ENCODE measurements at regions of chr3 and their contacts with region 1.

Region 1: GRCh38 chr3:111989061-111989678 is 9.6 kb upstream of the TAGLN3 start:
- DNase-seq: no peak
- ATAC-seq: peak; percentile 88
- H3K4me3 Mint-ChIP-seq: no peak overlapping the region
- H3K27ac Mint-ChIP-seq: no peak overlapping the region
- H3K4me1 Mint-ChIP-seq: peaks cover 28% of the 10 kb centered on the region
- H3K27me3 Mint-ChIP-seq: no peaks in the 10 kb centered on the region

Region 2: GRCh38 chr3:112007633-112008032 is 18.5 kb after region 1 on chr3:
- CTCF ChIA-PET with region 1: interaction called, 351 read pairs
- POLR2A ChIA-PET with region 1: interaction called, 3 read pairs
- DNase-seq: no peak
- ATAC-seq: no peak
- H3K4me3 Mint-ChIP-seq: no peak overlapping the region
- H3K27ac Mint-ChIP-seq: no peak overlapping the region
- H3K4me1 Mint-ChIP-seq: peaks cover 18% of the 10 kb centered on the region
- H3K27me3 Mint-ChIP-seq: no peaks in the 10 kb centered on the region